IMR-90 (cell line): ENCODE measurements at regions of chr10 and their contacts with region 1.

Region 1: GRCh38 chr10:58064714-58065528 is 202.8 kb downstream of the IPMK start:
- DNase-seq: peak; percentile 58
- ATAC-seq: peak; percentile 76
- H3K4me3 ChIP-seq: no peak overlapping the region
- H3K27ac ChIP-seq: no peak overlapping the region
- H3K4me1 ChIP-seq: no peaks in the 10 kb centered on the region
- H3K27me3 ChIP-seq: peaks cover 3% of the 10 kb centered on the region; the same call in 1 of the 2 replicates
- CTCF ChIP-seq: peak; percentile 95
- POLR2A ChIP-seq: no peak
- RAD21 ChIP-seq: peak; percentile 98

Region 2: GRCh38 chr10:57338823-57339558 is 725.9 kb before region 1 on chr10:
- CTCF ChIA-PET with region 1: no interaction called
- POLR2A ChIA-PET with region 1: no interaction called
- dilution Hi-C with region 1: no loop called
- in situ Hi-C with region 1: loop called (anchors 10 kb)
- intact Hi-C with region 1: loop called (anchors 1 kb)
- DNase-seq: peak; percentile 41
- ATAC-seq: peak; percentile 74
- H3K4me3 ChIP-seq: no peak overlapping the region
- H3K27ac ChIP-seq: no peak overlapping the region
- H3K4me1 ChIP-seq: no peaks in the 10 kb centered on the region
- H3K27me3 ChIP-seq: no peaks in the 10 kb centered on the region
- CTCF ChIP-seq: peak; percentile 64
- POLR2A ChIP-seq: no peak
- RAD21 ChIP-seq: peak; percentile 49

Region 3: GRCh38 chr10:57579926-57580325 is 485.0 kb before region 1 on chr10:
- CTCF ChIA-PET with region 1: no interaction called
- POLR2A ChIA-PET with region 1: no interaction called
- dilution Hi-C with region 1: no loop called
- in situ Hi-C with region 1: no loop called
- intact Hi-C with region 1: loop called (anchors 5 kb)
- DNase-seq: peak; percentile 2
- ATAC-seq: no peak
- H3K4me3 ChIP-seq: no peak overlapping the region
- H3K27ac ChIP-seq: no peak overlapping the region
- H3K4me1 ChIP-seq: no peaks in the 10 kb centered on the region
- H3K27me3 ChIP-seq: no peaks in the 10 kb centered on the region
- CTCF ChIP-seq: peak; percentile 39
- POLR2A ChIP-seq: no peak
- RAD21 ChIP-seq: peak; percentile 54

Region 4: GRCh38 chr10:57716886-57717285 is 348.0 kb before region 1 on chr10:
- CTCF ChIA-PET with region 1: no interaction called
- POLR2A ChIA-PET with region 1: no interaction called
- dilution Hi-C with region 1: no loop called
- in situ Hi-C with region 1: loop called (anchors 25 kb)
- intact Hi-C with region 1: loop called (anchors 1 kb)
- DNase-seq: peak; percentile 32
- ATAC-seq: peak; percentile 14; the same call in 1 of the 2 replicates
- H3K4me3 ChIP-seq: no peak overlapping the region
- H3K27ac ChIP-seq: no peak overlapping the region
- H3K4me1 ChIP-seq: no peaks in the 10 kb centered on the region
- H3K27me3 ChIP-seq: no peaks in the 10 kb centered on the region
- CTCF ChIP-seq: peak; percentile 51
- POLR2A ChIP-seq: no peak
- RAD21 ChIP-seq: peak; percentile 49

Region 5: DNA sequence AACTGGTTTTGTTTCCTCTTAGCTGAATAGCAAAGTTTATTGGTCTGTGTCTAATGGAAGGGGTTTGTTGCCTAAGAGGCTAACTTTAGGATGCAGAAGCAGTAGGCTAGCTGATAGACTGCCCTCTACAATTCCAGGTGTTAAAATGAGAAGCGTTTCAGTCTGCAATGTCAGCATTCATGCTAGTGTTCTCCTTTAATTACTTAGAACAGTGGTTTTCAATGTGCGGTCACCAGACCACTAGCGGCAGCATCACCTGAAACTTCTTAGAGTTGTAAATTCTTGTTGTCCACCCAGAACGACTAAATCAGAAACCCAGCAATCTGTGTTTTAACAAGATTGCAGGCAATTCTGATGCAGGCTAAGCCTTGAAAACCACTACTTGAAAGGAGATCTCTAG is 190.1 kb before region 1 on chr10:
- CTCF ChIA-PET with region 1: no interaction called
- POLR2A ChIA-PET with region 1: no interaction called
- dilution Hi-C with region 1: no loop called
- in situ Hi-C with region 1: no loop called
- intact Hi-C with region 1: loop called (anchors 10 kb)
- DNase-seq: no peak
- ATAC-seq: no peak
- H3K4me3 ChIP-seq: no peak overlapping the region
- H3K27ac ChIP-seq: no peak overlapping the region
- H3K4me1 ChIP-seq: no peaks in the 10 kb centered on the region
- H3K27me3 ChIP-seq: no peaks in the 10 kb centered on the region
- CTCF ChIP-seq: no peak
- POLR2A ChIP-seq: no peak
- RAD21 ChIP-seq: no peak

Region 6: DNA sequence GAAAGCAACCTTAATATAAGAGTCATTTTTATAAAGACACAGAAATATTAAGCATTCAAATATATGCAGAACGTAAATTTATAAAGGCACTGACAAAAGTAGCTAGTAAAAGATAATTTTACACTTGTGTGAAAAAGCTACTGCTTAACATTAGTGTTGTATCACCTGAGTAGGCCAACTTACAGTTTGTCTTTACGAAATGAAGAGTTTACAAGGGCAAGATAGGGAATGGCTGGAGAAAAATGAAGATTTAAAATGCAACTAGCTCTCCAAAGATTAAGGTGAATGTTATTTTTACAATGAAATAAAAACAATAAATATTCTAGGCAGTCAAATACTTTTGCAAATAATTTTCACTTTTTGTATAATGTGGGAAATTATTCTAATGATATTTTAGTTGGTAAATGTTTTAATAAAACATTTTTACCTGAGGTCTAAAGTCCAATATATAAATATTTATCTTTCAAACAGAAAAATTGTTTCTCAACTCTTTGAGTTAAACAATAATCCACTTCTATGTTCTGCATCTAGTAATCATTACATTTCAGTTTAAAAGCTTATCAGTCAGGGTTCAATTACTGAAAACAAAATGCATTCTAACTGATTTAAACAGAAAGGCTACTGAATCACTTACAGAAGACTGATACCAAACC is 179.8 kb before region 1 on chr10:
- CTCF ChIA-PET with region 1: no interaction called
- POLR2A ChIA-PET with region 1: no interaction called
- dilution Hi-C with region 1: no loop called
- in situ Hi-C with region 1: no loop called
- intact Hi-C with region 1: no loop called
- DNase-seq: no peak
- ATAC-seq: no peak
- H3K4me3 ChIP-seq: no peak overlapping the region
- H3K27ac ChIP-seq: no peak overlapping the region
- H3K4me1 ChIP-seq: no peaks in the 10 kb centered on the region
- H3K27me3 ChIP-seq: no peaks in the 10 kb centered on the region
- CTCF ChIP-seq: no peak
- POLR2A ChIP-seq: no peak
- RAD21 ChIP-seq: no peak

Region 7: DNA sequence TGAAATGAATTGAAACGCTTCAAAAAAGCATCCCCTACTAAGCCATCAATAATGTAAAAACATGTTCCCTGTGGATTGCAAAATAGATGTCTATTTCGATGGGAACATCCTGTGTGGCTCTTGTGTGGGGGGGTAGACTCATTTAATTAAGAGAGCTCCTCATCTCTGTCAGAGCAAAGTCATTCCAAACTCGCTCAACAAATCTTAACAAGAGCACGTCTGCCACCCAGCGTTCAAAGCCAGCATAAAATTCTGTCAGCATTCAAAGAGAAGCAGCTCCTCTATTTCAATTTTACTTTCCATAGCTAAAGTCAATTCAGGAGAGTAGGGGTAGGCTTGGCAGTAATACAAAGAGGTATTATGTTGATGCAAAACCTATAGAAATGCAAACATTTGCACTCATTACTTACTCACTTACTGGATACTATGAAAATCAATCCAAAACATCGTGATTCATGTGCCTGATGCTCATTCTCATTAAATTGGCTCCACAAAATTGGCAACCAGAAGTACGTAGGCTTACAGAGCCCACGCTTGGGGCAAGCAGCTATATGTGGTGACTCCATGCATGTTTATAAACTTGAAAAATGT is 87.8 kb after region 1 on chr10:
- CTCF ChIA-PET with region 1: no interaction called
- POLR2A ChIA-PET with region 1: no interaction called
- dilution Hi-C with region 1: no loop called
- in situ Hi-C with region 1: no loop called
- intact Hi-C with region 1: loop called (anchors 2 kb)
- DNase-seq: peak; percentile 53
- ATAC-seq: peak; percentile 58; the same call in 1 of the 2 replicates
- H3K4me3 ChIP-seq: no peak overlapping the region
- H3K27ac ChIP-seq: no peak overlapping the region
- H3K4me1 ChIP-seq: no peaks in the 10 kb centered on the region
- H3K27me3 ChIP-seq: peaks cover 6% of the 10 kb centered on the region
- CTCF ChIP-seq: peak; percentile 60
- POLR2A ChIP-seq: no peak
- RAD21 ChIP-seq: peak; percentile 50

Region 8: GRCh38 chr10:58326967-58327381 is 262.1 kb after region 1 on chr10:
- CTCF ChIA-PET with region 1: no interaction called
- POLR2A ChIA-PET with region 1: no interaction called
- dilution Hi-C with region 1: no loop called
- in situ Hi-C with region 1: no loop called
- intact Hi-C with region 1: no loop called
- DNase-seq: peak; percentile 42
- ATAC-seq: peak; percentile 70
- H3K4me3 ChIP-seq: peak overlapping the region; percentile 8
- H3K27ac ChIP-seq: no peak overlapping the region
- H3K4me1 ChIP-seq: no peaks in the 10 kb centered on the region
- H3K27me3 ChIP-seq: peaks cover 5% of the 10 kb centered on the region
- CTCF ChIP-seq: no peak
- POLR2A ChIP-seq: no peak
- RAD21 ChIP-seq: no peak

Region 9: DNA sequence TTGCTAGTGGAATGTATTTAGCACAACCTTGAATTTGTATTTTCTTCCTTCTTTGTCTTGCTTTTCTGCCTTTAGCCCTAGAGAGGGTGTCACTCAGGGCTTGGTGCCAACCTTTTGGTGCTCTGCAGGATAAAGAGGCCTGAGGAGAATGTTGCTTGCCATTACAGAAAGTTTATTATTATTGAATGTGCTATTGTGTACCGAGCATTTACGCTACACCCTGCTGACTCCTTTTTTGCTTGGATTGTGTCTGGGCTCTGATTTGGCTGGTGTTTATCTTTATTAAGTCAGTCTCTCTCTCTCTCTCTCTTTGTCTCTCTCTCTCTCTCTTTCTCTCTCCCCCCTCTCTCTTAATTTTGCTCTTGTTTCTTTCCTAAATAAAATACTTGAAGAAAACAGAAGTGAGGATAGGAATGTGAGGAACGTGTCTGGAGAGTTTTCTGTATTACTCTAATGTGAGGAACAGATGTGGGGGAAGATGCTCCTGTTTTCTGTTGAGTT is 827.2 kb after region 1 on chr10:
- CTCF ChIA-PET with region 1: no interaction called
- POLR2A ChIA-PET with region 1: no interaction called
- dilution Hi-C with region 1: no loop called
- in situ Hi-C with region 1: no loop called
- intact Hi-C with region 1: no loop called
- DNase-seq: no peak
- ATAC-seq: no peak; the same call in 1 of the 2 replicates
- H3K4me3 ChIP-seq: no peak overlapping the region
- H3K27ac ChIP-seq: no peak overlapping the region
- H3K4me1 ChIP-seq: no peaks in the 10 kb centered on the region
- H3K27me3 ChIP-seq: peaks cover 6% of the 10 kb centered on the region; the same call in 1 of the 2 replicates
- CTCF ChIP-seq: no peak
- POLR2A ChIP-seq: no peak
- RAD21 ChIP-seq: no peak